Dendritic cell treated with granulocyte-macrophage colony-stimulating factor and Interleukin-4, amounts not matched to agents 40 ng/mL and 50 ng/mL, for 4 days (primary cell): ENCODE measurements at regions of chr22 and their contacts with region 1.

Region 1: GRCh38 chr22:36387752-36388518 is at the start of gene MYH9:
- H3K4me3 Mint-ChIP-seq: peak within 1 kb of the TSS; percentile 98
- H3K27ac Mint-ChIP-seq: peak within 1 kb of the TSS; percentile 95
- H3K4me1 Mint-ChIP-seq: peaks cover 63% of the 10 kb centered on the region
- H3K27me3 Mint-ChIP-seq: no peaks in the 10 kb centered on the region

Region 2: GRCh38 chr22:36331306-36331911 is 56.5 kb before region 1 on chr22:
- intact Hi-C with region 1: loop called (anchors 5 kb)
- H3K4me3 Mint-ChIP-seq: peak overlapping the region; percentile 61
- H3K27ac Mint-ChIP-seq: peak overlapping the region; percentile 88
- H3K4me1 Mint-ChIP-seq: peaks cover 82% of the 10 kb centered on the region
- H3K27me3 Mint-ChIP-seq: no peaks in the 10 kb centered on the region

Region 3: DNA sequence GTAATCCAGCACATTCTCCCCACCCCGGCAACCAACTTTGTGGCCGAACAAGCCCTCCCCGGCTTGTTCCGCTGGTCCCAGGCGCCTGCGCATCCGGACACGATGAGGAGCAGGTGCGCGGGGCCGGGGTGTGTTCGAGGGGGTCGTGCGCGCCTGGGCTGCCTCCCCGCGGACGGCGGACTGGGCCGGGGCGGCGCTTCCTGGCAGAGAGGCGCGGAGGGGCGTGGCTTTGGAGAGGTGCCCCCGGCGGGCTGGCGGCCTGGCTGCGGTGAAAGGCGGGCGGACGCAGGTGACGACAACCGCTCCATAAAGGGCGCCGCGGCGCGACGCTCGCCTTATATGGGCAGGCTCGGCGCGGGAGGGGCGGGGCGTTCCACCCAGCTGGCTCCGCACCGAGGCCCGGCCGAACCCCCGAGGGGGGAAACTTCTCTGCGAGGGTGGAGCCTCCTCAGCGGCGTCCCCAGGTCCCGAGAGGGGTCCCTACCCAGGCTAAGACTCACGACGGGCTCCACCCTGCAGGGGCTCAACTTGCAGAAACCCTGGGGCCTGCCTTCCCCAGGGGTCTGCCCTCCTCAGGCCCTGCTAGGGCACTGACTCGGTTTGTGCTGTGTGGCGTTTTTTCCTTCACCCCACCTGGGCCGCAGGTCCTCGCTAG is 67.1 kb after region 1 on chr22:
- intact Hi-C with region 1: loop called (anchors 5 kb)
- H3K4me3 Mint-ChIP-seq: peak overlapping the region; percentile 68
- H3K27ac Mint-ChIP-seq: peak overlapping the region; percentile 68
- H3K4me1 Mint-ChIP-seq: peaks cover 47% of the 10 kb centered on the region
- H3K27me3 Mint-ChIP-seq: peaks cover 2% of the 10 kb centered on the region

Region 4: DNA sequence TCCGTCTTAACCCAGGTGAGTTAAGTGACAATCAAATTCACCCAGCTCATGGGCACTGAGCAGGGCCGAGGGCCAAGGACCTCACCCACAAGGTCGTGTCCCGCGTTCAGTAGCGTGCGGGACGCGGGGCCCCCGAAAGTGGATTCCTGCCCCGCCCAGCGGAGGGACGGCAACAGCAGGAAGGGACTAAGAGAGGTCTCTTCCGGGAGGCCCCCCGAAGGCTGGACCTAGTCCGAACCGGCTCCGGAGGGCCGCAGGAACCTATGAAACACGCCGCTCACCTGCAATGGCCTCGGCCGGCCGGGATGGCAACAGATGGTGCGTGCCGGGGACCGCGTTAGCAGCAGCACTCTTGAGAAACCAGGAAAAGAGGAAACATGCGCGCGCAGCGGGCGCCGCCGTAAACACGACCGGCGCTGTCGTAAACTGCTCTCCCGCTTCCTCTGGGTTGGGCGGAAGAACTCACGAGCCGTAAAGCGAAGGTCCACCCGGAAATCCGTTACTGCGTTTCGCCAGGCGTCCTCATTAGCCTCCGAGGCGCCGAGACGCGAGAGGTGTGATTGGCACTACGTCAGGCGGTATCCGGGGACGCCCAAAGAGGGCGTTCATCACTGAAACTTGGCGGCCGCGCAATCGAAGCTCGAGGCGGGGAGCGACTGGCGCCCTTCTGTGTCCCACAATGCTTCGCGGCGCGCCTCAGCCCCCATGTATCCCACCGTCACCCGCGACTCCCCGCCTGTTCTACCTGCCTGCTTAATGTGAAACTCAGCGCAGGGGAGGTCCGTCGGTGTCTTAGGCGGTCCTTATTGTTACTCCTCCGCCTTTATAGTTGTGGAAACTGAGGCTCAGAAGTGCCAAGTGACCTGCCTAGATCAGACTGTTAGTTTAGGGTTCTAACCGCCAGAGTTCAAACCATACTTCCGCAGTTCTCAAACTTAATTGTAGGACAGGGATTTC is 141.1 kb after region 1 on chr22 and contains the start of gene EIF3D:
- intact Hi-C with region 1: loop called (anchors 5 kb)
- H3K4me3 Mint-ChIP-seq: peak within 1 kb of the TSS; percentile 86
- H3K27ac Mint-ChIP-seq: peak within 1 kb of the TSS; percentile 97
- H3K4me1 Mint-ChIP-seq: peaks cover 17% of the 10 kb centered on the region
- H3K27me3 Mint-ChIP-seq: peaks cover 2% of the 10 kb centered on the region